Activated CD8-positive, alpha-beta T cell treated with anti-CD3 and anti-CD28 coated beads, Interleukin-2, amount 10 ng/mL, durations not matched to agents 7 days and 5 days (primary cell): ENCODE measurements at regions of chr1 and their contacts with region 1.

Region 1: GRCh38 chr1:156767101-156767878 is at the start of gene PRCC:
- DNase-seq: peak; percentile 99
- ATAC-seq: peak; percentile 96
- H3K4me3 Mint-ChIP-seq: no peak within 1 kb of the TSS
- H3K27ac Mint-ChIP-seq: no peak within 1 kb of the TSS
- H3K4me1 Mint-ChIP-seq: peaks cover 42% of the 10 kb centered on the region
- H3K27me3 Mint-ChIP-seq: no peaks in the 10 kb centered on the region
- total RNA-seq, gene PRCC: 71.9 to 75.5 TPM

Region 2: DNA sequence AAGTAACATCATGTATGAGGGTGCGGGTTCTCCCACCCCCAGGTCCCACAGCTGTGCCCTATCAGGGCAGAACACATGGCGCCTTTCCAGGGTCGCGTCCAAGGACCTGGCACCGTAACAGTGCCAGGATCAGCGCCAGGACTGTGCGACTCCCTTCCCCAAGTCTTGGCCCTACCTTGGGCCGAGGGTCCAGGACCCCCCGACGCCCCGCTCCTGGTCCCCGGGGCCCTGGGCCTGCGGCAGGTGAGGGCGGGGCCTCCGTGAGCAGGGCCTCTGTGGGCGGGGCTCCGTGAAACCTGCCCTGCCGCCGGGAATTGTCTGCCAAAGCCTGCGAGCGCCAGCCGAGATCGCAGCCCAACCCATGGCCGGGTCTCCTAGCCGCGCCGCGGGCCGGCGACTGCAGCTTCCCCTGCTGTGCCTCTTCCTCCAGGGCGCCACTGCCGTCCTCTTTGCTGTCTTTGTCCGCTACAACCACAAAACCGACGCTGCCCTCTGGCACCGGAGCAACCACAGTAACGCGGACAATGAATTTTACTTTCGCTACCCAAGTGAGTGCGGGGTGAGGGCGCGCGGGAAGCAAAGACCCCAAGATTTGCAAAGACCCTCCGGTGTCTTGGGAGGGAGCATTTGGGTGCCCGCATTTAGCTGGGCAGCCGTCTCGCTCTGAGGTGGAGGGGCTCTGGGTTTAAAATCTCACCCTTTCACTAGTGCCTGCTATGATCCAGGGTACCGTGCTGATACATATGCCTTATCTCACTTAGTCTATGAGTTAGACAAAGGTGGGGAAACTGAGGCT is 398.2 kb before region 1 on chr1 and contains the start of gene RHBG:
- CTCF ChIA-PET with region 1: no interaction called
- POLR2A ChIA-PET with region 1: no interaction called
- DNase-seq: no peak
- ATAC-seq: peak; percentile 56
- H3K4me3 Mint-ChIP-seq: peak within 1 kb of the TSS; percentile 34
- H3K27ac Mint-ChIP-seq: no peak within 1 kb of the TSS
- H3K4me1 Mint-ChIP-seq: peaks cover 4% of the 10 kb centered on the region
- H3K27me3 Mint-ChIP-seq: peaks cover 58% of the 10 kb centered on the region
- total RNA-seq, gene RHBG: not detected

Region 3: GRCh38 chr1:156641761-156642264 is 125.5 kb before region 1 on chr1 and contains the start of gene BCAN:
- CTCF ChIA-PET with region 1: no interaction called
- POLR2A ChIA-PET with region 1: no interaction called
- DNase-seq: no peak
- ATAC-seq: peak; percentile 30
- H3K4me3 Mint-ChIP-seq: peak within 1 kb of the TSS; percentile 29
- H3K27ac Mint-ChIP-seq: no peak within 1 kb of the TSS
- H3K4me1 Mint-ChIP-seq: peaks cover 37% of the 10 kb centered on the region
- H3K27me3 Mint-ChIP-seq: peaks cover 77% of the 10 kb centered on the region
- total RNA-seq, gene BCAN: not detected

Region 4: GRCh38 chr1:156697481-156697880 is 69.8 kb before region 1 on chr1:
- CTCF ChIA-PET with region 1: no interaction called
- POLR2A ChIA-PET with region 1: no interaction called
- DNase-seq: no peak
- ATAC-seq: no peak
- H3K4me3 Mint-ChIP-seq: no peak overlapping the region
- H3K27ac Mint-ChIP-seq: no peak overlapping the region
- H3K4me1 Mint-ChIP-seq: peaks cover 24% of the 10 kb centered on the region
- H3K27me3 Mint-ChIP-seq: peaks cover 21% of the 10 kb centered on the region

Region 5: GRCh38 chr1:156740679-156741612 is 26.3 kb before region 1 on chr1 and contains the start of gene MRPL24:
- CTCF ChIA-PET with region 1: interaction called, 3 read pairs
- POLR2A ChIA-PET with region 1: interaction called, 11 read pairs
- DNase-seq: peak; percentile 99
- ATAC-seq: peak; percentile 89
- H3K4me3 Mint-ChIP-seq: peak within 1 kb of the TSS; percentile 99
- H3K27ac Mint-ChIP-seq: peak within 1 kb of the TSS; percentile 98
- H3K4me1 Mint-ChIP-seq: peaks cover 59% of the 10 kb centered on the region
- H3K27me3 Mint-ChIP-seq: no peaks in the 10 kb centered on the region
- total RNA-seq, gene MRPL24: 59.8 to 62.6 TPM

Region 6: DNA sequence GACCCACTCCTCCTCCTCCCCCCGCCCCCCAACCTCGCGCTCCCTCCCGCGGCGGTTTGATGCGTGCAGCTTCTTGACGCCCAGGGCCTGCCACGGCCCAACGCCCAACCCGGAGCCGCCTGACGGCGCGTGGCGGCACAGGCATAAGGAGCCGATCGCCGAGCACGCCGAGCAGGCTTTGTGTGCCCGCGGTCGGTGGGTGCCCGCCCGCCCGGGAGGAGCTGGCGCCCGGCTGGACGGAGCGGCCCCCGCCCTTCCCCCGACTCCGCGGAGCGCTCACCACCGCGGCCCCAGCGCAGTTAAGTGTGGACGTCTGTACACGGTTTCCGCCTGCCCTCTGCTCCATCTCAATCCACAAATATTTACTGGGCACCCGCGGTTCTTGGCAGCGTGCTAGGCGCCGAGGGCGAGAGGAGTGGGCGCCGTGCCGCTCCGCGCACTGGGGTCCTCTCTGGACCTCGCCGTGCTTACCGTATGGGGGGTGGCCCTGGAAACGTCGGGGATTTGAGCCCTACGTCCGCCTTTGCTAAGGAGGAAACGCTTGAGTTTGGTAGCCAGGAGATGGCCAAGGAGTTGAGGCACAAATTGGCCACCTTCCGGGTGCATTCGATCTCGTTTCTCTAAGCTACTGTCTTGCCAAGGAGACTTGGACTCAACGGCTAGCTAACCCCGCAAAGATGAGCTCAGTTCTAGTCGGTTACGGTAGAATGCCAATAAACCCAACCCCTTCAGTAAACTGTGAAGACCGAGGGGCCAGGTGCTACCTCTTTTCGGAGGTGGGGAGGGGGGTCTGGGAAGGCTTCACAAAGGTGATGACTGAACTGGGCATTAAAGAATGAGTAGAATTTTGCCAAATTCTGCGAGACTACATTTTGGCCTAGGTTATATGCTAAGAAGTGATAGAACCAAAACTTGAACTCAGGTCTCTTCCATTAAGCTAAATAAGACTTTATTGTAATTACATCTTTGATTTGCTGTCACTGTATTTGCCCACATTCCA is 15.2 kb before region 1 on chr1:
- CTCF ChIA-PET with region 1: interaction called, 8 read pairs
- POLR2A ChIA-PET with region 1: interaction called, 26 read pairs
- DNase-seq: peak; percentile 98
- ATAC-seq: peak; percentile 83
- H3K4me3 Mint-ChIP-seq: peak overlapping the region; percentile 96
- H3K27ac Mint-ChIP-seq: peak overlapping the region; percentile 96
- H3K4me1 Mint-ChIP-seq: peaks cover 37% of the 10 kb centered on the region
- H3K27me3 Mint-ChIP-seq: no peaks in the 10 kb centered on the region